ENCODE measurements at regions of chr2 and their contacts with region 1.

Region 1: DNA sequence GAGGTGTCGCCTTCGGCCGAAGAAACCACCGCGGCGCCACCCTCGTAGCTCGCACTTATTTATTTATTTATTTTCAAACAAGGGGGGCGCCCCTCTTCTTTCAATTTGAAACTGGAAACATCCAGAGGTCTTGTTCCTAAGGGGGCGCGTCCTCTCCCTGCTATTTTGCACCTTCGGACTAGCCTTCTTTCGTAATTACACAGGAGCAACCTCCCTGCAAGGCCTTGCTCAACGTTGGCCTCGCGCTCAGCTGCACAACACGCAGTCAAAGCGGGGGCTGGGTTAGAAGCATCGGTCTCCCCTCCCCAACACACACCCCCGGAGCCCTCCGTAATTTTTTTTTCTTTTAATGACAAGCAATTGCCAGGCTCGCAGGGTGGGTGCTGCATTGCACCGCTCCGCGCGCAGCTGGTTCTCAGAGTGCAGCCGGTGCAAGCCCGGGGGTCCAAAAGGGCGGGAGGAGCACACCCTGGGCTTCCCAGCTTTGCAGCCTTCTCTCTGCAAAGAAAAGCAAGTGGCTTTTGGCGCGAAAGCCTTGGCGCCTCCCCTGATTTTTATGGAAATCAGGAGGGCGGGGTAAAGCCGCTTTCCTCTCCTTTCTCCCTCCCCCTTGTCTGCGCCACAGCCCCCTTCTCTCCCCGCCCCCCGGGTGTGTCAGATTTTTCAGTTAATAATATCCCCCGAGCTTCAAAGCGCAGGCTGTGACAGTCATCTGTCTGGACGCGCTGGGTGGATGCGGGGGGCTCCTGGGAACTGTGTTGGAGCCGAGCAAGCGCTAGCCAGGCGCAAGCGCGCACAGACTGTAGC is at the start of gene MYCN:
- DNase-seq: peak; percentile 92 to 95
- H3K4me3 ChIP-seq: peak within 1 kb of the TSS; percentile 75
- H3K4me3 Mint-ChIP-seq: peak within 1 kb of the TSS; percentile 85
- H3K27ac Mint-ChIP-seq: peak within 1 kb of the TSS; percentile 69
- H3K4me1 ChIP-seq: peaks cover 19% of the 10 kb centered on the region
- H3K4me1 Mint-ChIP-seq: peaks cover 17% of the 10 kb centered on the region
- H3K27me3 ChIP-seq: no peaks in the 10 kb centered on the region
- H3K27me3 Mint-ChIP-seq: no peaks in the 10 kb centered on the region
- CTCF ChIP-seq: peak in 1 of 2 experiments; percentile 80
- total RNA-seq, gene MYCN: 46.6 and 54.4 TPM in 2 replicates

Region 2: GRCh38 chr2:15799432-15799827 is 140.6 kb before region 1 on chr2:
- CTCF ChIA-PET with region 1: interaction called, 7 read pairs
- POLR2A ChIA-PET with region 1: no interaction called
- intact Hi-C with region 1: loop called (anchors 1 kb)
- DNase-seq: no peak
- H3K4me3 ChIP-seq: no peak overlapping the region
- H3K4me3 Mint-ChIP-seq: no peak overlapping the region
- H3K27ac Mint-ChIP-seq: peak overlapping the region; percentile 62
- H3K4me1 ChIP-seq: peaks cover 49% of the 10 kb centered on the region
- H3K4me1 Mint-ChIP-seq: peaks cover 39% of the 10 kb centered on the region
- H3K27me3 ChIP-seq: no peaks in the 10 kb centered on the region
- H3K27me3 Mint-ChIP-seq: no peaks in the 10 kb centered on the region
- CTCF ChIP-seq: no peak

Region 3: DNA sequence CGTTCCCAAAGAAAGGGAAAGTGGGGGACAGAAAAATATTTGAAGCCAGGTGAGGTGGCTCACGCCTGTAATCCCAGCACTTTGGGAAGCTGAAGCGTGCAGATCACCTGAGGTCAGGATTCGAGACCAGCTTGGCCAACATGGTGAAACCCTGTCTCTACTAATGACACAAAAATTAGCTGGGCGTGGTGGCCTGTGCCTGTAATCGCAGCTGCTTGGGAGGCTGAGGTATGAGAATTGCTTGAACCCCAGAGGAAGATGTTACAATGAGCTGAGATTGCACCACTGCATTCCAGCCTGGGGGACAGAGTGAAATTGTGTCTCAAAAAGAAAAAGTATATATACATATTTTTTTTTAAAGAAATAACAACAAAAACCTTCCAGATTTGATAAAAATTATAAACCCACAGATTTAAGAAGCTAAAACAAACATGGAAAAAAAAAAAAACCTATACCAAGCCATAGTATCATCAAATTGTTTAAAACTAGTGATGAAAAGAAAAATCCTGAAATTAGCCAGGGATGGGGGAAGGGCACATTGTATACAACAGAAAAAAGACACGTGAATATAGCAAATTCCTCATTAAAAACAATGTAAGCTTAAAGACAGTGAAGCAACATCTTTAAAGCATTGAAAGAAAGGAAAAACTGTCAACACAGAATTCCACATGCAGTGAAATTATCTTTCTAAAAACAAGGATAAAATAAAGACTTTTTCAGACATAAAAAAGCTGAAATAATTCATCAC is 40.1 kb before region 1 on chr2:
- CTCF ChIA-PET with region 1: no interaction called
- POLR2A ChIA-PET with region 1: no interaction called
- intact Hi-C with region 1: no loop called
- DNase-seq: no peak
- H3K4me3 ChIP-seq: no peak overlapping the region
- H3K4me3 Mint-ChIP-seq: no peak overlapping the region
- H3K27ac Mint-ChIP-seq: no peak overlapping the region
- H3K4me1 ChIP-seq: no peaks in the 10 kb centered on the region; the same call in 1 of the 2 replicates
- H3K4me1 Mint-ChIP-seq: no peaks in the 10 kb centered on the region
- H3K27me3 ChIP-seq: no peaks in the 10 kb centered on the region
- H3K27me3 Mint-ChIP-seq: no peaks in the 10 kb centered on the region
- CTCF ChIP-seq: no peak

Region 4: GRCh38 chr2:16034151-16034973 is 94.3 kb after region 1 on chr2:
- CTCF ChIA-PET with region 1: interaction called, 5 read pairs
- POLR2A ChIA-PET with region 1: no interaction called
- intact Hi-C with region 1: loop called (anchors 1 kb)
- DNase-seq: peak in 1 of 2 experiments; percentile 19
- H3K4me3 ChIP-seq: no peak overlapping the region
- H3K4me3 Mint-ChIP-seq: no peak overlapping the region
- H3K27ac Mint-ChIP-seq: no peak overlapping the region
- H3K4me1 ChIP-seq: 0 out of 2 replicates have a peak, but pooled peaks cover 6% of the 10 kb centered on the region
- H3K4me1 Mint-ChIP-seq: peaks cover 13% of the 10 kb centered on the region
- H3K27me3 ChIP-seq: no peaks in the 10 kb centered on the region
- H3K27me3 Mint-ChIP-seq: no peaks in the 10 kb centered on the region
- CTCF ChIP-seq: peak in 1 of 2 experiments; percentile 29

Region 5: DNA sequence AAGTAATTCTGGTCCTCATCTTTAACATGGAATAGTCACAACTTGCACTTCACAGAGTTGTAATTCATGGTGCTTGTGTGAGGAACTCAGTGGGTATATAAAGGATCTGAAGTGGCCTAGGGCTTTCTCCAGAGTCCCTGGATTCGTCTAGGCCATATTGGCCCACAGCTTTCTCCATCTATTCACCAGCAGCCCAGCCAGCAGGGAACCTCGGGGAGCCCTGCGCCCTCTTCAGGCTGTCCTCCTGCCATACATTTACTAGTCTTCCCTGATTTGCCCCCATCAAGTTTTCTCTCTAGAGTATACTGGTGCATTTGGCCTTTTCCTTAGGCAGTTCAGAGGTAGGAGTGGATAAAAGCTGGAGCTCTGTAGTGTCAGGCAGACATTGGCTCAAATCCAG is 278.6 kb after region 1 on chr2:
- CTCF ChIA-PET with region 1: interaction called, 7 read pairs
- POLR2A ChIA-PET with region 1: no interaction called
- intact Hi-C with region 1: loop called (anchors 2 kb)
- DNase-seq: peak; percentile 54 to 55
- H3K4me3 ChIP-seq: no peak overlapping the region
- H3K4me3 Mint-ChIP-seq: no peak overlapping the region
- H3K27ac Mint-ChIP-seq: no peak overlapping the region
- H3K4me1 ChIP-seq: peaks cover 4% of the 10 kb centered on the region; the same call in 1 of the 2 replicates
- H3K4me1 Mint-ChIP-seq: no peaks in the 10 kb centered on the region
- H3K27me3 ChIP-seq: no peaks in the 10 kb centered on the region
- H3K27me3 Mint-ChIP-seq: no peaks in the 10 kb centered on the region
- CTCF ChIP-seq: peak; percentile 37 to 53

Region 6: GRCh38 chr2:16425462-16426336 is 485.6 kb after region 1 on chr2:
- CTCF ChIA-PET with region 1: interaction called, 6 read pairs
- POLR2A ChIA-PET with region 1: no interaction called
- intact Hi-C with region 1: loop called (anchors 1 kb)
- DNase-seq: peak; percentile 97 to 99
- H3K4me3 ChIP-seq: no peak overlapping the region
- H3K4me3 Mint-ChIP-seq: peak overlapping the region; percentile 55
- H3K27ac Mint-ChIP-seq: peak overlapping the region; percentile 99
- H3K4me1 ChIP-seq: peaks cover 46% of the 10 kb centered on the region
- H3K4me1 Mint-ChIP-seq: peaks cover 58% of the 10 kb centered on the region
- H3K27me3 ChIP-seq: no peaks in the 10 kb centered on the region
- H3K27me3 Mint-ChIP-seq: no peaks in the 10 kb centered on the region
- CTCF ChIP-seq: no peak

Region 7: GRCh38 chr2:16756831-16757644 is 817.0 kb after region 1 on chr2:
- CTCF ChIA-PET with region 1: no interaction called
- POLR2A ChIA-PET with region 1: no interaction called
- intact Hi-C with region 1: loop called (anchors 5 kb)
- DNase-seq: peak; percentile 67 to 80
- H3K4me3 ChIP-seq: no peak overlapping the region
- H3K4me3 Mint-ChIP-seq: no peak overlapping the region
- H3K27ac Mint-ChIP-seq: no peak overlapping the region
- H3K4me1 ChIP-seq: no peaks in the 10 kb centered on the region
- H3K4me1 Mint-ChIP-seq: peaks cover 5% of the 10 kb centered on the region
- H3K27me3 ChIP-seq: no peaks in the 10 kb centered on the region
- H3K27me3 Mint-ChIP-seq: peaks cover 17% of the 10 kb centered on the region
- CTCF ChIP-seq: peak; percentile 85 to 97